ENCODE measurements at regions of chr19 and their contacts with region 1.

Region 1: GRCh38 chr19:55407800-55408532 is 378 bp upstream of the UBE2S start:
- DNase-seq: peak; percentile 99
- ATAC-seq: peak; percentile 93
- H3K4me3 ChIP-seq: peak overlapping the region; percentile 79
- H3K27ac ChIP-seq: peak overlapping the region; percentile 93
- H3K4me1 ChIP-seq: peaks cover 20% of the 10 kb centered on the region
- H3K27me3 ChIP-seq: no peaks in the 10 kb centered on the region
- CTCF ChIP-seq: no peak

Region 2: DNA sequence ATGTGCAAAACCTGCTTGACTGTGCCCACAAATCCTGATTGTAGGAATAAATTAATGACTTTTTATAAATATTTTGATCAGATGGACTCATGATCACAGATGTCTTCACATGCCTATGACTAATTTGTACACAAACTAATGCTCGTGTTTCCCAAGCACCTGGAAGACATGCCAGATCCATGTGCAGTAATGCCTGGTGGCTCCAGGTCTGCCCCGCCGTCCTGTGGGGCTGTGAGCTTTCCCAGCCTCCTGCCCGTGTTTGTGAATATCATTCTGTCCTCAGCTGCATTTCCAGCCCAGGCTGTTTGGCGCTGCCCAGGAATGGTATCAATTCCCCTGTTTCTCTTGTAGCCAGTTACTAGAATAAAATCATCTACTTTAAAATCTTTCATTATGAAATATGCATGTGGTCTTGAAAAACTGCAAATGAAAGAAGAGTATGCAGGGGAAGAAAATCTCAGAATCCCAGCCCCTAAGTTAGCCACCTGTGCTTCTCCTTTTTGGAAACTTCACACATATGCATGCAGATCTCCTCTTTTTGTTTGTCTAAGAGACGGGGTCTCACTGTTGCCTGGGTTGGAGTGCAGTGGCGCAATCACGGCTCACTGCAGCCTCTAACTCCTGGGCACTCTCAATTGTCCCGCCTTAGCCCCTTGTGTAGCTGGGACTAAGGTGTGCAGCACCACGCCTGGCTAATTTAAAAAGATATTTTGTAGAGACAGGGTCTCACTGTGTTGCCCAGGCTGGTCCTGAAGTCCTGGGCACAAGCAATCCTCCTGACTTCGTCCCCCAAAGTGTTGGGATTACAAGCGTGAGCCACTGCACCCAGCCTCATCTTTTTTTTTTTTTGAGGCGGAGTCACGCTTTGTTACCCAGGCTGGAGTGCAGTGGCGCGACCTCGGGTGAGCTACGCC is 16.0 kb before region 1 on chr19:
- CTCF ChIA-PET with region 1: no interaction called
- POLR2A ChIA-PET with region 1: interaction called, 14 read pairs
- intact Hi-C with region 1: no loop called
- DNase-seq: peak; percentile 46
- ATAC-seq: peak; percentile 33
- H3K4me3 ChIP-seq: no peak overlapping the region
- H3K27ac ChIP-seq: no peak overlapping the region
- H3K4me1 ChIP-seq: peaks cover 17% of the 10 kb centered on the region
- H3K27me3 ChIP-seq: no peaks in the 10 kb centered on the region
- CTCF ChIP-seq: no peak

Measured in PC-3 (cell line).